Activated T-helper 2 cell treated with anti-CD3 and anti-CD28 coated beads, Interferon-gamma antibody, Interleukin-2, Interleukin-4, amounts not matched to agents 10 μg/mL and 5 μg/mL and 100 μg/mL, durations not matched to agents 14 hours and 24 hours and 36 hours (primary cell): ENCODE measurements at regions of chr5 and their contacts with region 1.

Region 1: GRCh38 chr5:87282269-87282668 is 14.6 kb downstream of the RASA1 start:
- DNase-seq: no peak
- H3K4me3 Mint-ChIP-seq: peak overlapping the region; percentile 64
- H3K27ac Mint-ChIP-seq: peak overlapping the region; percentile 74
- H3K4me1 Mint-ChIP-seq: peaks cover 40% of the 10 kb centered on the region
- H3K27me3 Mint-ChIP-seq: no peaks in the 10 kb centered on the region

Region 2: DNA sequence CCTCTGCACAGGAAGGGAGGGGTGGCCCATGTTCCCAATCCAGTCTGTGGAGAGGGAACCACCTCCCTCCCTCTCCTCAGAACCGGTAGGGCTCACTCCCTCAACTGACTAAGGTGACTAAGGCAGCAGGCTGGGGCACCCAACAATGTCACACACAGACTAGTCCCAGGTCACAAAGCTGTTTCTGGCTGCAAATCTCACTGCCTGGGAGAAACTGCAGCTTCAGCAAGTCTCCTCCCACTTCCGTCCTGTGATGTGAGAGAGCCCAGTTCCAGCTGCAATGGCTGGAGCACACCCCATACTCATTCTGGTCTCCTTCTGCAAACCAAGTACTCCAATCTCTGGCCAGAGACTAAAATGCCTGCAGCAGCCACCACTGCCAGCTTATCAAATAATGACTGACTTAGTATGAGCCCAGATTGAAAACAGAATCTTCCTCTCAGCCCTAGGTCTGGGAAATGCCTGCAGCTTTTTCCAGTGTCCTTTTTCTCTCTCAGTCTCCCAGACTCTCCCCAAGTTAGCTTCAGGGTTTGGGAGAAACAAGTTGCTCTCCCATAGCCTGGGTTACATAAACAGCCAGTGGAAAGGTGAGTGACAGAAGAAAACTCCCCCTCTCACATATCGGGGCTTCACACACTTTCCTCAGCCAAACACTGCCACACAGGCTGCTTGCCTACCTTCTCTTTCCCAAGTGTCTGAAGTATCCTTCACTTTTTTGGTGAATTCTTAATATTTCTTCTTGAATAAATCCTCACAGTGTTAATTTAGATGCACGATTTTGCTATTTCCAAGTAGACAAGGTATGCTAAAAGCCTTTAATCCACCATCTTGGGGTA is 262.0 kb before region 1 on chr5:
- intact Hi-C with region 1: no loop called
- DNase-seq: peak; percentile 26
- H3K4me3 Mint-ChIP-seq: no peak overlapping the region
- H3K27ac Mint-ChIP-seq: no peak overlapping the region
- H3K4me1 Mint-ChIP-seq: peaks cover 15% of the 10 kb centered on the region
- H3K27me3 Mint-ChIP-seq: peaks cover 5% of the 10 kb centered on the region

Region 3: GRCh38 chr5:87081511-87082372 is 200.5 kb before region 1 on chr5:
- intact Hi-C with region 1: loop called (anchors 5 kb)
- DNase-seq: peak; percentile 30
- H3K4me3 Mint-ChIP-seq: peak overlapping the region; percentile 41
- H3K27ac Mint-ChIP-seq: peak overlapping the region; percentile 54
- H3K4me1 Mint-ChIP-seq: peaks cover 41% of the 10 kb centered on the region
- H3K27me3 Mint-ChIP-seq: no peaks in the 10 kb centered on the region

Region 4: GRCh38 chr5:87251591-87252282 is 30.5 kb before region 1 on chr5:
- intact Hi-C with region 1: no loop called
- DNase-seq: no peak
- H3K4me3 Mint-ChIP-seq: no peak overlapping the region
- H3K27ac Mint-ChIP-seq: no peak overlapping the region
- H3K4me1 Mint-ChIP-seq: no peaks in the 10 kb centered on the region
- H3K27me3 Mint-ChIP-seq: peaks cover 23% of the 10 kb centered on the region

Region 5: GRCh38 chr5:87300744-87301143 is 18.5 kb after region 1 on chr5:
- intact Hi-C with region 1: loop called (anchors 1 kb)
- DNase-seq: no peak
- H3K4me3 Mint-ChIP-seq: no peak overlapping the region
- H3K27ac Mint-ChIP-seq: no peak overlapping the region
- H3K4me1 Mint-ChIP-seq: peaks cover 57% of the 10 kb centered on the region
- H3K27me3 Mint-ChIP-seq: no peaks in the 10 kb centered on the region